GM10248 (cell line): ENCODE measurements at regions of chr1 and their contacts with region 1.

Region 1: GRCh38 chr1:145927063-145927886 is at the start of gene RBM8A:
- DNase-seq: peak; percentile 89
- CTCF ChIP-seq: peak; percentile 42

Region 2: DNA sequence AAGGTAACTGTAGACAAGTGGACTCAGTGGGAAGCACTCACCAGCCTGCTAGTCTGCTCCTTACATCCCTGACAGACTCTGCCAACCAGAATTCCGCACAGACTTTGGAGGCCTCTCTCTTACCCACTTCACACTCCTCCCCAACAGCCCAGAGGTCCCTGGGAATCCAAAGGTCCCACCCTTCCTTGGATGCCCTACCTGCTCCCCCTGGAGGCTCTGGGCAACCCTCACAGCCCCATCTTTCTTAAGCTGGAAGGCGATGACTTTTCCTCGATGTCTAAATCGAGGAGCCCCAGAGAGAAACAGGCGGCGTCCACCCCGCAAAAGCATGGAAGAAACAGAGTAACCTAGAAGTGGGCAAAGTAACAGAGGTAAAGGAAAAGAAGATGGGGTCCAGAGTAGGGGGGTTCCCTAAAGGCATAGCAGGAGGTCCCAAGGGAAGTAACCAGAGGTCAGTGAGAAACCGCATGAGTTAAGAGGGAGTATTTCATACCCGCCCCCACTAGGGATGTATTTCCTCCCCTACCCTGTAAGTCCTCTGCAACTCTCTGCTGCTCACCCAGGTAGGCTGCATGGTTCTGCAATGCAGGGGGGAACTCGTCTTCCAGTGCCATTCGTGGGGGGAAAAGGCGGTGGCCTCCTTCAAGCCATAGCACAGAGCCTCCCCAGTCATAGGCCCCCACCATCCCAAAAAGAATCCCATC is 25.8 kb before region 1 on chr1:
- CTCF ChIA-PET with region 1: no interaction called
- POLR2A ChIA-PET with region 1: no interaction called
- DNase-seq: no peak
- CTCF ChIP-seq: no peak

Region 3: DNA sequence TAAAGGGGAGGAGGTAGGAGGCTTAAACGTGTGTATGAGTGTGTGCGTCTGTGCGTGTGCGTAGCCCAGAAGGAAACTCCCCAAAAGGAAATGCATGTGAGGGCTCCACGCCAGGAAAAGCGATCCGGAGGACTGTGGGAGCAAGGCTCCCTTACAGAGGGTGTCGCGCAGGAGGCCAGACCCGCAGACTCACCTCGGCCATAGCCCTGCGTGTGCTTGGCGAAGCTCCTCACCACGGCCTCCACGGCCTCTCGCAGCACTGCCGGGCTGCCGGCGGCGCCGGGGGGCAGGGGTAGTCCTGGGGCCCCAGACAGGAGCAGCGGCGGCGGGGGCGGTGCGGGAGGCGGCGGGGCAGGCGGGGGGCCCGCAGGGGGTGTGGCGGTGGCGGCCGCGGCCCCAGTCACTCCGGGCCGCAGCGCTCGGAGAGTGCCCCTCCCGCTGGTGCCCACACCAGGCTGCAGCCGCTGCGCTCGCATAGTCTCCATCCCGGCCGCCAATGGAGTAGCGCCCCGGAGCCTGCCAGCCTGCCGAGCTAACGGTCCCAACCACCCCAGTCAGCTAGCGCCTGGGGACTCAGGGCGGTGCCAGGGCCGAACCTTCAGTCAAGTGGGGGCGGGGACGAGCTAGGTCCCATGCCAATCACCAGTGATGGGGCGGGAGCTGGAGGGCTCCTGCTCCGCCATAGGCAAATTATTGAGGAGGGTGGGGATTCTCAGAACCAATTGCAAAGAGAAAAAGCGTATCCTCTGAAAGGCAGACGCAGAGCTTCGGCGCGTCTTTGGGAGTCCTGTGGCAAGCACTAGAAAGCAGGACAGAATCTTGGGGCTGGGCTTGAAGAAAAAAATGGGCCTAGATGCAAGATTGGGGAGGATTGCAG is 30.4 kb after region 1 on chr1 and contains the start of gene LIX1L:
- CTCF ChIA-PET with region 1: interaction called, 13 read pairs
- POLR2A ChIA-PET with region 1: interaction called, 8 read pairs
- DNase-seq: peak; percentile 95
- CTCF ChIP-seq: no peak